ENCODE measurements at regions of chr11 and their contacts with region 1.

Region 1: DNA sequence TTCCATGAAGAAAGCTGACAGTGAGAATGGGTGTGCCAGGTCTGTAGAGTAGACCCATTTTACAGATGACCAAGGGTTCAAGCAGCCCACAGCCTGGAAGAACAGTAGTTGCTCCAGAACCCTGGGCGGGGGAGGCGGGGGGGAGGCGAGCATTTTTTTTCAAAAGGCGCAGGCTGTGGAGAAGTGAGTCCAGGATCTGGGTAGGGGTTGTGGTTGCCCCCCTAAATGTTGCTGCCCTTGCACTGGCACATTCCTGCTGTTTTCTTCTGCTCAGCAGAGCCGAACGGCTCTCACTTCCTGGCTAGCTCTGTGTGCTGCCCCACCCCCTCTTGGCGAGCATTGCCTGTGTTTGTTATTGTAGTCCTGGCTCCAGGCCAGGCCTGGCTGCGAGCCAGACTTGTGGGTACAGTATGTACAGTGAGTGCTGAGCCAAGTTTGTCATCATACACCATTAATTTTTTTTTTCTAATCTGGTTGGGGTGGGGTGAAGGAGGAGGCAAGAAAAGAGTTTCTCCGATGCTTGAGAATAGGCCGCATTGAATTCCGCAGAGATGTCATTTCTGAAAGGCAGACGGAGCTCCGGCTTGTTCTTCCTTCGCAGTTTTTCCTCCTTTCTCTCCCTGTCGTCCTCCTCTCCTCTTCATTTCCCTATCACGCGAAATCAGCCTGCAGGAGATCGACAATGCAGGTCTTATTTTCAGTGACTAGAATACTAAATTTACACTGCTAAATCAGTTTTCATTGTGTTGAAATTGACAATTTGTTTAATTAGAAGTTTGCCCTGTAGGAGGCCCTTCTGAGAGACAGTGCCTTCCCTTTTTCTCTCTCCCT is 100.5 kb downstream of the ZBTB16 start:
- DNase-seq: peak; percentile 98
- H3K4me3 Mint-ChIP-seq: peak overlapping the region; percentile 77
- H3K27ac Mint-ChIP-seq: peak overlapping the region; percentile 84
- H3K4me1 Mint-ChIP-seq: peaks cover 59% of the 10 kb centered on the region
- H3K27me3 Mint-ChIP-seq: no peaks in the 10 kb centered on the region

Region 2: DNA sequence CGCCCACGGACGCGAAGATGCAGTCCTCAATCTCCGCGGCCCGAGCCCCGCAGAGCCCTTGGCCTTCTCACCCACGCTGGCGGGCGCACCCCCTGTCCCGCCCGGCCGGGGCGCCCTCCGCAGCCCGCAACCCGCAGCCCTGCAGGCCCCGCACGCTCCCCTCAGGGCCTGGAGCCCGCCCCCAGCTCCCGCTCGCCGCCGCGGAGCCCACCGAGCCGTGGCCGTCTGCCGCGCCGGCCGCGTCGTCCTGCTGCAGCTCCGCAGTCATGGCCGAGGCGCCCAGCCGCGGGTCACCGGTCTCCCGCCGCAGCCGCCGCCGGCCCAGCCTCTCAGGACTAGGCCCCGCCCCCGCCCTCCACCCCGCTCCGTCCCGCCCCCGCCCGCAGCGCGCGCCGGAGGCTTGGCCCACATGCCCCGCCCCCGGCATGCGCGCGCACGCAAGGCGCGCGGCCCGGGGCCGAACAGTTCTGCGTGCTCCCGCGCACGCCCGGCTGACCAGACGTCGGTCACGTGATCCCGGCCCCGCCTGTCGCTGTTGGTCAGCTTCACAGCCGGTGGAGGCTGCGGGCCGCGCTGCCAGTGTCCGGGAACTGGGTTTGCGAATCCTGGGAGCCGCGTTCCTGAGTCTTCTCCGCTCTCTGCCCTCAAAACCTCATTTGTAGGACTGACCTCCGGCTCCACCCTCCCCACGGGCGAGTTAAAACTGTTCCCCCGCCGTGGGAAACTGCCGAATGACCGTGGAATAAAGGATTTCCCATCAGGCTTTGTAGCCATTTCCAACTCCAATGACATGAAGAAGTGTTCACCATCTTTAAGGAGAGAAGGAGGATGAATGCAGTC is 284.6 kb before region 1 on chr11 and contains the start of gene USP28:
- intact Hi-C with region 1: loop called (anchors 10 kb)
- DNase-seq: peak; percentile 95
- H3K4me3 Mint-ChIP-seq: peak within 1 kb of the TSS; percentile 91
- H3K27ac Mint-ChIP-seq: peak within 1 kb of the TSS; percentile 96
- H3K4me1 Mint-ChIP-seq: peaks cover 47% of the 10 kb centered on the region
- H3K27me3 Mint-ChIP-seq: no peaks in the 10 kb centered on the region
- total RNA-seq, gene USP28: 34.8 and 36.2 TPM in 2 replicates

Region 3: DNA sequence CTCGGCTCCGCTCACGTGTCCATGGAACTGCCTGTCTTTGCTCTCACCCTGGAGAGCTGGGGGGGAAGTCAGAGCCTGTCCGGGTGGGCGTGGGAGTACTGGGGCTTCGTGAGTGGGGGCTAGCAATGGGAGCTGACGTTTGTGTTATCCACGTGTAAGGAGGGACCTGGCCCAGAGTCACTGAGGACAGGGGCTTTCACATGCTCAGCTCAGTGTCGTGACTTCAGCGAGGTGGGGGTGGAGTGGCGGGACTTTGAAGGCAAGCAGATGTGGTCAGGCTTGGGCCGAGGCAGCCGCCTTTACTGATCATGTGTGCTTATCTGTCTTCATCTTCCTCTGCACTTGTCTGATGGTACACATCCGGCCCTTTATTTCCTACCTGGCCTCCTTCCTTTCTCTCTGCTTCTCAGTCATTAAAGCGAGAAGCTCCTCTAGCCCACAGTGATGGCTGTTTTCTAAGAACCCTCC is 23.1 kb after region 1 on chr11:
- intact Hi-C with region 1: loop called (anchors 2 kb)
- DNase-seq: peak; percentile 92
- H3K4me3 Mint-ChIP-seq: peak overlapping the region; percentile 51
- H3K27ac Mint-ChIP-seq: peak overlapping the region; percentile 94
- H3K4me1 Mint-ChIP-seq: peaks cover 74% of the 10 kb centered on the region
- H3K27me3 Mint-ChIP-seq: no peaks in the 10 kb centered on the region

Measured in activated CD4-positive, alpha-beta T cell treated with anti-CD3 and anti-CD28 coated beads, Interleukin-2, amount 10 ng/mL, durations not matched to agents 24 days and 14 days (primary cell).